ENCODE measurements at regions of chr5 and their contacts with region 1.

Region 1: DNA sequence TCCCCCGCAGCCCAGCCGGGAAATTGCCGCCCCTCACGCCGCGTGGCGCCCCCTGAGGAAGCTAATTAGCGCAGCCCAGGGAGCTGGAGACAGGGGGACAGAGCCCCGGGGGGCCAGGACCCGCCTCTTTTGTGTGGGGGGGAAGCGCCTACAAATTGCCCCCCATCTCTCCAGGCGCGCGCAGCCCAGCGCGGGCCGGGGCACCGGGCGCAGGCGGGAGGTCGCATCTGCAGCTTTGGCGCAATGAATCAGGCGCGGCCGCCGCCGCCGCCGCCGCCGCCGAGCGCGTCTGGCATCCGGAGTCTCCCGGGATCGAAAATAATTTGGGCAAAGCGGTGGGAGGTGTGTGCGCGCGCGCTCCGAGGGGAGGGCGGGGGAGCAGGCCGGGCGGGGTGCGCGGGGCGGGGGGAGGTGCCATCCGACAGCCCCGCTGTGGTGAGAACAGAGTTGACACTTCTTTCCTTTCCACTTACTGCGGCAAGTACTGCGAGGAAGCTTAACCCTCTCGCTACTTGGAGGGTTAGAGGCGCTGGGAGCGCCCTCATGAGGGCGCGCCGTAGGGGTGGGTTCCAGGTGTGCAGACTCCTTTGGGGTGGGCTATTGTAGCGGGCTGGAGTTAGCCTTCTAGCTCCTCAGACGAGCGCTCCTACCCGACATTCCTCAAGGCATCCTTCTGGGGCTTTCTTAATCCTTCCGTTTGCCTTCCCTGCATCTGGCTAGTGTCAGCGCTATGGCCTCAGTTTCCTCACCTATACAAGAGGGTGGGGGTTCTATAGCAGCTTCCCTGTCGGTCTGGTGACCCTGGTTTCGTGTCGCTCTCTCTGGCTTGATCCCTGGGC is 63.1 kb downstream of the CXXC5 start:
- DNase-seq: peak; percentile 6
- H3K4me3 Mint-ChIP-seq: peak overlapping the region; percentile 54
- H3K27ac Mint-ChIP-seq: no peak overlapping the region
- H3K4me1 Mint-ChIP-seq: peaks cover 5% of the 10 kb centered on the region
- H3K27me3 Mint-ChIP-seq: peaks cover 50% of the 10 kb centered on the region

Region 2: GRCh38 chr5:139651853-139652787 is 59.2 kb before region 1 on chr5:
- intact Hi-C with region 1: loop called (anchors 1 kb)
- DNase-seq: peak; percentile 50
- H3K4me3 Mint-ChIP-seq: peak overlapping the region; percentile 4
- H3K27ac Mint-ChIP-seq: no peak overlapping the region
- H3K4me1 Mint-ChIP-seq: peaks cover 26% of the 10 kb centered on the region
- H3K27me3 Mint-ChIP-seq: peaks cover 47% of the 10 kb centered on the region

Region 3: GRCh38 chr5:139696894-139697658 is 14.2 kb before region 1 on chr5:
- intact Hi-C with region 1: loop called (anchors 2 kb)
- DNase-seq: no peak
- H3K4me3 Mint-ChIP-seq: no peak overlapping the region
- H3K27ac Mint-ChIP-seq: no peak overlapping the region
- H3K4me1 Mint-ChIP-seq: no peaks in the 10 kb centered on the region
- H3K27me3 Mint-ChIP-seq: peaks cover 28% of the 10 kb centered on the region

Region 4: DNA sequence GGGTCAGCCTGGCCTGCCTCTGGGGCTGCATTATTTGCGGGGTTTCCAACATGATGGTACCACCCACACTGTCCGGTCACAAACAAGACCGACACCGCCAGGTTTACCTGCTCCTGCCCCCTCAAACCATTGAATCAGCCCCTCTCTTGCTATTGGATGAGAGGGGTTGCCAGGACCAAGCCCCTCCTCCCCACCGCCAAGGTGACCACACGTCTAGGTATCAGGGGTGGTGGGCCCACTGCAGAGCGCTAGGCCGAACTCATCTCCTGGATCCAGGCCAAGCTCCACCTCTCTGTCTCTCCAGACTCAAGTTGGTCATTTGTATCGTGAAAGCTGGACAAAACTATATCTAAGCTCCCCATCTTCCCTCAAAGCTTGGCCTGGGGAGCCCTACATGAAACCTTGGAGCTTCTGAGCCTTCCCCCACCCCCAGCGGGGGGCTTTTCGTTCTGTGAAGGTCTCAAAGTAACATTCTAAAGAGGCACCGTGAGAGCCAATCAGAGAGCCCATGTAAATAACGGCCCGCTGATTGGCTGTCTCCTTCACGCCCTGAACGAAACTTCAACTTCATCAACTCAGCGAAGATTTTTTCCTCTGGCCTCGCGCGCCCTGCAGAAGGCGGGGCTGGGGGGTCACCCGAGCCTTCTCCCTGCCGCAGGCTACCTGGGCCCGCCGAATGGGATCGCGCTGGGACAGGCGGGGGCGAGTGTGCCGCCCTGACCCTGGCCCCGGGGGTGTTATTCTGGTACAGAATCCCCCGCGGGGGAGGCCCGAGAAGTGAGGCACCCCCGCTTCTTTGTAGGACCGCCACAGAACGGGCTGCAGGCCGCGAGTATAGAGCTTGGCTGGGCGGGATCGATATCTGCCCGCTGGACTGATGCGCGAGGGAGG is 34.8 kb after region 1 on chr5:
- intact Hi-C with region 1: loop called (anchors 1 kb)
- DNase-seq: peak; percentile 19
- H3K4me3 Mint-ChIP-seq: peak overlapping the region; percentile 85
- H3K27ac Mint-ChIP-seq: peak overlapping the region; percentile 26
- H3K4me1 Mint-ChIP-seq: peaks cover 24% of the 10 kb centered on the region
- H3K27me3 Mint-ChIP-seq: peaks cover 45% of the 10 kb centered on the region

Region 5: DNA sequence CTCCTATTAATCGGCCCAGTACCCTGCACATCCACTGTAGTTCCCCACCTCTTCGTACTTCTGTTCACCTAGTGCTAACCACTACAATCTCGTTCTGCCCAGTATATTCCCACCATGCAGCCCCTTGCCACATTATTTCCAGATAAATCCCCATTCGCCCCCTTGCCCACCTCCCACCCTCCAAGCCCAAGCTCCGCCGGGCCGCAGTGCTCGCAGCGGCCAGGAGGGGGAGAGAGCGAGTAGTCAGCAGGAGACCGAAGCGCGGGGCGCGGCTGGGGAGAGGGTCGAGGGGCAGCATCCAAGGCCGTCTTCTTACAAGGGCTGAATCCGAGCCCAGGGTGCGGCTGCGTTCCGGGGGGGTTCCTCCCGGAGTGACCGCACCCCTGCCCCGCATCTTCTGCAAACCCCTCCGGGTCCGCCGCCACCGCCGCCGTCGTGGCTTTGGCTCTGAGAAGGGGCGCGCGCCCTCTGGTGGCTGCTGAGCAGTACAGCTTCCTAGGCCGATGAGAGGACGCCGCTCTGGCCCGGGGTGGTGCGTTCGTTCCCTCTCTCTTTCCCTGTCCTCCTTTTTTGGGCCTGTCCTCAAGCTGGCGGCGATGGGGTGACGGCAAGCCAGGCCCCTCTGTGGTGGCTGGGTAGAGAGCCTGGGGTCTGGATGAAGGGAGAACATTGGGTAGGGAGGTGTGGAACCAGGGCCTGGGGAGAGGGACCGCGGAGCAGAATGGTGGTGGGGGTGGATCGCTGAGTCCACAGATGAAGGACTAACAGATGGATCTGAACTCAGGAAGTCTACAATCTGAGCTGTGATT is 54.3 kb after region 1 on chr5:
- intact Hi-C with region 1: loop called (anchors 5 kb)
- DNase-seq: peak; percentile 68
- H3K4me3 Mint-ChIP-seq: peak overlapping the region; percentile 75
- H3K27ac Mint-ChIP-seq: peak overlapping the region; percentile 47
- H3K4me1 Mint-ChIP-seq: peaks cover 14% of the 10 kb centered on the region
- H3K27me3 Mint-ChIP-seq: peaks cover 46% of the 10 kb centered on the region

Region 6: DNA sequence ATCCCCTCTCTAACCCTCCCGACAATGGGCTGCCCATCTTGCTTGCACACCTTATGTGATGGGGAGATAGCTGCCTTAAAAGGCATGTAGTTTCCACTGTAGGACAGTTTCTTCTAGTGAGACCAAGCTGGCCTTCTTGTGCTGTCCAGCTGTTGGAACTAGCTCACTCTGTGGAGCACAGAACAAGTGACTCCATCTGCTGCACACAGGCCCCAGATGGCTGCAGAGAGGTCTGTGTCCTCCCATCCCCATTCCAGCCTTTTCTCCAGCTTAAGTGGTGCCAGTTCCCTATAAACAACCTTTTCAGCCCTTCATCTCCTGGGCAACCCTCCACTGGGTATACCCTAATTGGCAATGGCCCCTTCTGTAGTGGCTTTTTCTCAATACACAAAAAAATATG is 65.6 kb after region 1 on chr5:
- intact Hi-C with region 1: no loop called
- DNase-seq: no peak
- H3K4me3 Mint-ChIP-seq: no peak overlapping the region
- H3K27ac Mint-ChIP-seq: no peak overlapping the region
- H3K4me1 Mint-ChIP-seq: no peaks in the 10 kb centered on the region
- H3K27me3 Mint-ChIP-seq: peaks cover 24% of the 10 kb centered on the region

Region 7: GRCh38 chr5:140035881-140036280 is 324.6 kb after region 1 on chr5:
- intact Hi-C with region 1: no loop called
- DNase-seq: no peak
- H3K4me3 Mint-ChIP-seq: no peak overlapping the region
- H3K27ac Mint-ChIP-seq: no peak overlapping the region
- H3K4me1 Mint-ChIP-seq: peaks cover 6% of the 10 kb centered on the region
- H3K27me3 Mint-ChIP-seq: peaks cover 72% of the 10 kb centered on the region

Region 8: GRCh38 chr5:140821375-140822280 is 1110.3 kb after region 1 on chr5 and contains the start of gene PCDHA5:
- intact Hi-C with region 1: no loop called
- DNase-seq: no peak
- H3K4me3 Mint-ChIP-seq: no peak within 1 kb of the TSS
- H3K27ac Mint-ChIP-seq: no peak within 1 kb of the TSS
- H3K4me1 Mint-ChIP-seq: no peaks in the 10 kb centered on the region
- H3K27me3 Mint-ChIP-seq: no peaks in the 10 kb centered on the region
- total RNA-seq, gene PCDHA5: not detected in 2 replicates

Region 9: DNA sequence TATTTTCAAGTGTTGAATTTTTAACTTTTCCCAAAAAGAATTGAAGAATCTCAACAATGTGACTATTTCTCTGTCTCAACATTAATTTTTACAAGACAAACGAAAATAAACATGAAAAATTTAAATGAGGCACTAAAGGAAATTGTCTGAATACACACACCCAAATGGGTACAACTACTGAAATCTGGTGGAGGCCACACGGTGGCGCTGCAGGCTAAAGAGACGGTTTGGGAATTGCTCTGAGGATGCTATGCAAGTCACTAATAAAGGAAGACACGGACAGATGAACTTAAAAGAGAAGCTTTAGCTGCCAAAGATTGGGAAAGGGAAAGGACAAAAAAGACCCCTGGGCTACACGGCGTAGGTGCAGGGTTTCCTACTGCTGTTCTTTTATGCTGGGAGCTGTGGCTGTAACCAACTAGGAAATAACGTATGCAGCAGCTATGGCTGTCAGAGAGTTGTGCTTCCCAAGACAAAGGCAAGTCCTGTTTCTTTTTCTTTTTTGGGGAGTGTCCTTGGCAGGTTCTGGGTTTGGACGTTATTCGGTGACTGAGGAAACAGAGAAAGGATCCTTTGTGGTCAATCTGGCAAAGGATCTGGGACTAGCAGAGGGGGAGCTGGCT is 1480.9 kb after region 1 on chr5 and contains the start of gene PCDHB10:
- intact Hi-C with region 1: no loop called
- DNase-seq: no peak
- H3K4me3 Mint-ChIP-seq: no peak within 1 kb of the TSS
- H3K27ac Mint-ChIP-seq: no peak within 1 kb of the TSS
- H3K4me1 Mint-ChIP-seq: no peaks in the 10 kb centered on the region
- H3K27me3 Mint-ChIP-seq: peaks cover 5% of the 10 kb centered on the region
- total RNA-seq, gene PCDHB10: not detected in 2 replicates

Measured in activated T-helper 1 cell treated with anti-CD3 and anti-CD28 coated beads, Interleukin-12 subunit alpha, Interleukin-12 subunit beta, Interleukin-2, Interleukin-4 antibody, amounts not matched to agents 30 ng/mL and 10 ng/mL and 1 ng/mL, durations not matched to agents 14 hours and 24 hours and 36 hours (primary cell).